GM12878 (cell line): ENCODE measurements at regions of chr1 and their contacts with region 1.

Region 1: DNA sequence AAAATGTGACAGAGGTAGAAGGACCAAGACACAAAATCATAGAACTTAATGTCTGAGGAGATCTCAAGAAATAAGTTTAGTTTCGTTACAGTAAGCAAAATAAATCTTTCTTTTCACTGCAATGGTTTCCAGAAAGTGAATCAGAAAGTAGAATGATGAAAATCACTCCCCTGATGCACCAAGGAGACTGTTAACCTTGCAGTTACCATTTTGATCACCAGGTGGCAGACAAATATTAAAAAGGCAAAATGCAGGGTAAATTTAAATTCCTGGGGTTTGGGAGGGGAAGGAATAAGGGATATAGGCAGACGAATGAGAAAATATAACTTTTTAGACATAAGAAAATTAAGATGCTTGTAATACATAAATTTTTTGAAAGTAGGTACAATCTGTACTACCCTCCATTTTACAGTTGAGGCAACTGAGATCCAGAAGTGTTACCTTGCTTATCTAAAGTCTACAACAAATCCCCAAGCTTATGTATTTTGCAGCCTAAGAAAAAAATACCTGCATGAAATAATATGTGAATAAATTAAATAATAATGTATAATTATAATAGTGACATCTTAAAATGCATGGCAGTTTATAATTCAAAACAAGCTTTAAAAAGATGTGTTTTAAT is 253.2 kb downstream of the CRB1 start:
- DNase-seq: no peak
- ATAC-seq: peak; percentile 75
- H3K4me3 ChIP-seq: no peak overlapping the region
- H3K27ac ChIP-seq: no peak overlapping the region
- H3K4me1 ChIP-seq: no peaks in the 10 kb centered on the region
- H3K27me3 ChIP-seq: no peaks in the 10 kb centered on the region
- CTCF ChIP-seq: peak; percentile 51 to 64 (median 62)
- EP300 ChIP-seq: no peak
- POLR2A ChIP-seq: no peak
- RAD21 ChIP-seq: peak; percentile 63

Region 2: DNA sequence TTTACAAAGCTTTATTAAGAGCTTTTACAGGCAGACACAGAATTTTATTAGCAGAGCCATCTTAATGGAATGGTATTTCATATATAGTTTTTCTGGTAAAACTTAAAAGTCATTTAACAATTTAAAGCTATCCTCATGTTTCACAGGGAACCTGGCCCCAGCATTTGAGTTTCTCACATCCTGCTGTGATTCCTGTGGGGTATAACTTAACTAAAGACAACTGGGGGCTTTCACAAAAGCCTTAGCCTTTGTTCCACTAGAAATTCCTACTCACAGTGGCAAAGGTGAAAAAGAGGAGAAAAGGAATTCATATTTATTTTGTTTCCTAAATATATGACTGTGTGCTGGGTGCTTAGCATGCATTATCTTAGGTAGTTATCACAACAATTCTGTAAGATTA is 20.2 kb after region 1 on chr1:
- CTCF ChIA-PET with region 1: interaction called, 13 read pairs
- POLR2A ChIA-PET with region 1: no interaction called
- RAD21 ChIA-PET with region 1: interaction called, 3 read pairs
- SMC1A ChIA-PET with region 1: interaction called, 10 read pairs
- in situ Hi-C with region 1: no loop called
- intact Hi-C with region 1: no loop called
- DNase-seq: no peak
- ATAC-seq: no peak
- H3K4me3 ChIP-seq: no peak overlapping the region
- H3K27ac ChIP-seq: no peak overlapping the region
- H3K4me1 ChIP-seq: no peaks in the 10 kb centered on the region
- H3K27me3 ChIP-seq: no peaks in the 10 kb centered on the region
- CTCF ChIP-seq: no peak
- EP300 ChIP-seq: no peak
- POLR2A ChIP-seq: no peak
- RAD21 ChIP-seq: no peak

Region 3: GRCh38 chr1:197546989-197547388 is 25.8 kb after region 1 on chr1:
- CTCF ChIA-PET with region 1: interaction called, 12 read pairs
- POLR2A ChIA-PET with region 1: no interaction called
- RAD21 ChIA-PET with region 1: no interaction called
- SMC1A ChIA-PET with region 1: interaction called, 4 read pairs
- in situ Hi-C with region 1: no loop called
- intact Hi-C with region 1: no loop called
- DNase-seq: no peak
- ATAC-seq: no peak
- H3K4me3 ChIP-seq: no peak overlapping the region
- H3K27ac ChIP-seq: no peak overlapping the region
- H3K4me1 ChIP-seq: no peaks in the 10 kb centered on the region
- H3K27me3 ChIP-seq: no peaks in the 10 kb centered on the region
- CTCF ChIP-seq: no peak
- EP300 ChIP-seq: no peak
- POLR2A ChIP-seq: no peak
- RAD21 ChIP-seq: no peak

Region 4: DNA sequence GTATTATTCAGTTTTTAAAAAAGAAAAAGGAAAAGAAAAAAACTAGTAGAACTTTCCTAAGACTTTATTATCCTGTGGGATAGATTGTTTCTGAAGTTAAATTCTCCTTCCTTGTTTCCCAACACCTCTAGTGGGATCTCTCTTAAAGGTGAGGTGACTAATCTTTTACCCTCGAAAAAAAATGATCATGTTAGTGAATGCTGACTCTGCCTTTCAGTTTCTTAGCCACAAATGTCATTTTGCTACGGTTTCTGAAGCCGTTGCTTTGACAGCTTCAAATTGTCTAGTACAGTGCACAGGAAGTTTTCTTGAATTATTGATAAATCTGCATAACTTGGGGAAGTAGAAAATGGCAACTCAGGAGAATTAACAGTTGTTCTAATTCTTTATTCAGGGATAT is 622.6 kb after region 1 on chr1:
- CTCF ChIA-PET with region 1: no interaction called
- POLR2A ChIA-PET with region 1: no interaction called
- RAD21 ChIA-PET with region 1: no interaction called
- SMC1A ChIA-PET with region 1: no interaction called
- in situ Hi-C with region 1: no loop called
- intact Hi-C with region 1: no loop called
- DNase-seq: no peak
- ATAC-seq: peak; percentile 45; the same call in 2 of the 3 replicates
- H3K4me3 ChIP-seq: no peak overlapping the region
- H3K27ac ChIP-seq: no peak overlapping the region
- H3K4me1 ChIP-seq: no peaks in the 10 kb centered on the region
- H3K27me3 ChIP-seq: no peaks in the 10 kb centered on the region
- CTCF ChIP-seq: no peak
- EP300 ChIP-seq: no peak
- POLR2A ChIP-seq: no peak
- RAD21 ChIP-seq: no peak